Dorsolateral prefrontal cortex (tissue), 120 donors: ENCODE measurements at regions of chr13 and their contacts with region 1.

Region 1: DNA sequence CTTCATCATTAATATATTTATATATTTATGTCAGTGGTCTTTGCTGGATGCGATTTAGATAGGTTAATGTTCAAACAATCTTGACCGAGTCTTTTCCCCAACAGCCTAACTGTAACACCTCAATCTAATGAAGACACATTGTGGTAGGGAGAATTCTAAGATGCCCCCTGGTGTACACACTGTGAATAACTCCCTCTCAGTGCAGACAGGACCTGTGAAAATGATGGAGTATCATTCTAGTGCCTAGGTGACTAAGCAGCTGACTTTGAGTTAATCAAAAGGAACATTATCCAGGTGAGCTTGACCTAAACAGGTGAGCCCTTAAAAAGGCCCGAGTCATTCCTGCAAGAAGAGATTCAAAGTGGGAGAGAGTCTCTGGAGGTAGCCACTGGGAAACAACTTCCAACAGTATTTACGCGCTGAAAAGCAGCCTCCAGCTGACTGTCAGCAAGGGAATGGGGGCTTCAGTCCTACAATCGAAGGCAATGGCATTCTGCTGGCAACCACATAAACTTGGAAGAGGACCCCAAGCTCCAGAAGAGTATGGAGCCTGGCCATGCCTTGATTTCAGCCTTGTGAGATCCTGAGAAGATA is 28.0 kb upstream of the KBTBD7 start:
- DNase-seq: peak in 3 of 10 donors; percentile 16 to 52 (median 30)
- H3K4me3 ChIP-seq: no peak overlapping the region
- H3K27ac ChIP-seq: no peak overlapping the region
- H3K27me3 ChIP-seq: no peaks in the 10 kb centered on the region
- CTCF ChIP-seq: peak; percentile 52 to 86 (median 78)

Region 2: DNA sequence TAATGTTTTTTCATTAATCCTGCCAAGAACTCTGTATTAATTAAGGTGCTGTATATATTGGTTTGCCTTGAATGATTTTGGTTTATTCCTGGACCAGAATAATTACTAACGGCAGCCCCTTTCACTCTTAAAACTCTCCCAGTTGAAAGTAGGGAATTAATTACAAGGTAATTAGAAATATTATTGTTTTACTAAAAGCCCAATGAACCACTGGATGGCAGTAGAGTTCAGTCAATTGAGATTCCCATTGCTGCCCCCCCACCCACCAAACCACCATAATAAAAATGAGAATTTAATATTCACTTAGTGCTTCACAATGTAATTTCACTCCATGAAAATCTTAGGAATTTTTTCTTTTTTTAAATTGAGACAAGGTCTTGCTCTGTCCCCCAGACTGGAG is 147.3 kb before region 1 on chr13:
- intact Hi-C with region 1: loop called (anchors 1 to 10 kb)
- DNase-seq: no peak
- H3K4me3 ChIP-seq: no peak overlapping the region
- H3K27ac ChIP-seq: peak overlapping the region in 1 of 59 donors; percentile 2
- H3K27me3 ChIP-seq: no peaks in the 10 kb centered on the region
- CTCF ChIP-seq: peak; percentile 43 to 80 (median 64)